ENCODE measurements at regions of chr3 and their contacts with region 1.

Region 1: DNA sequence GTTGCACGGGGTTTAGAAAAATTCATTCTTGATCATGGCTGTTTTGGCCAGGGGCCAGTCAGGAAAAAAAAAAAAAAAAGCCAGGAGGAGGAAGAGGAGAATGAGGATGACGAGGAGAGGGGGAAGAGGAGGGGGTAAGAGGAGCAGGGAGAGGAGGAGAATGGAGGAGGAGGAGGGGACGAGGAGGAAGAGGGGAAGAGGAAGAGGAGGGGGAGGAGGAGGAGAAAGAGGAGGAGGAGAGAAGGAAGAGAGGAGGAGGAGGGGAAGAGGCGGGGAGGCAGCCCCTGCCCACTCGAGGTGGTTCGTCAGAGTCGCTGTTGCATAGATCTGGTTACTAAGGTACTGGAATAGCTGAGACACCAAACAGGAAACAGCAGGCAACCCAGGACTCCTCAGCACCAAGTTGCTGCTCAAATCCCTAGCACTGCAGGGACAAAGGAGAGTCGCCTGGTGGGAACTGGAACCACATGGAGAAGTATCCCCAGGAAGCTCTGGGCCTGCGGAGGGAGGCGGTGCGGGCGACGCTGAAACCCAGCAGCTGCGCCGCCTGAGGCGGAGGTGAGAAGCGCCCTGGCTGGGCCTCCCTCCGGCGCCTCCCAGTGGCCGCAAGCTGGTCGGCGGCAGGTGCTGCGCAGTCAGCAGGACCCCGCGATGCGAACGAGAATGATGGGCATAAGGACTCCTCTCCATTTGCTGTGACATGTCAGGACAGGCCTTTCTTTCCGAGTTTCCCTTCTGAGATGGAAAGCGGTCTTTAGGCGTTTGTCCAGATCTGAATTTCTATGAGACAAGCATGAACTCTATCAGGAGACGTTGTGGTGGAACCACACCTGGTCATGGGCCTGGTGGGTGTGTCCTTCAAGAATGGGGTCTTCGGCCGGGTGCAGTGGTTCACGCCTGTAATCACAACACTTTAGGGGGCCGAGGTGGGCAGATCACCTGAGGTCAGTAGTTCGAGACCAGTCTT is 17.5 kb downstream of the FAM240A start:
- H3K4me3 Mint-ChIP-seq: peak overlapping the region; percentile 14
- H3K27ac Mint-ChIP-seq: no peak overlapping the region
- H3K4me1 Mint-ChIP-seq: peaks cover 27% of the 10 kb centered on the region
- H3K27me3 Mint-ChIP-seq: peaks cover 11% of the 10 kb centered on the region

Region 2: DNA sequence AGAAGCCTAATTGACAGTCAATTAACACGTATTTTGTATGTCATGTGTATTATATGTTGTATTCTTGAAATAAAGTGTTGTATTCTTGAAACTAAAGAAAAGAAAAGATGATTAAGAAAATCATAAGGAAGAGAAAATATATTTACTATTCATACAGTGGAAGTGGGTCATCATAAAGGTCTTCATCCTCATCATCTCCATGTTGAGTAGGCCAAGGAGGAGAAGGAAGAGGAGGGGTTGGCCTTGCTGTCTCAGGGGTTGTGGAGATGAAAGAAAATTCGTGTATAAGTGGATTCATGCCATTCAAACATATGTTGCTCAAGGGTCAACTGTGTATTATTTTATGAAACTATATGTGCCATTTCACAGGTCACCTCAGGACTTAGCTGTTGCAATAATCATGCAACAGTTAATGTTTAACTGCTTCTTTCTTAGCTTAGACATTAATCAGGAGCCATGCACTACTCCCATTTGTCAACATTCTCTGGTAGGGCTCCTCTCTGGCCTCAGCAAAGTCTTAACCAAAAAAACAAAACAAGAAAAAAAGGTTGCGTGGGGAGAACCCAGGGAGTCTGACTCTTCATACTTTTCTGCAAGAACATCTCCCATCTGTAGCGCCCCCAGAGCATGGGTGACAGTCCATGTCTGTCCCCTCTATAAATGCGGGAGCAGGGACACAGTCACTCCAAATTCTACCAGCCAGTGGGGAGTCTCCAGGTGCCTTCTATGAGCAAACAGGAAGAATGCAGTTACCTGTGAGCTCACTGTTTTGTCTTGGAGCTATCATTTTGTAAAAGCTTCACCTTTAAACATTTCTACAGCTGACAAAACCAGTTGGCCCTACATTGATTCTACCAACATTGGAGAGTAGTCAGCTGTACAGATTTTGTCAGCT is 43.8 kb before region 1 on chr3:
- intact Hi-C with region 1: loop called (anchors 10 kb)
- H3K4me3 Mint-ChIP-seq: no peak overlapping the region
- H3K27ac Mint-ChIP-seq: no peak overlapping the region
- H3K4me1 Mint-ChIP-seq: no peaks in the 10 kb centered on the region
- H3K27me3 Mint-ChIP-seq: peaks cover 18% of the 10 kb centered on the region

Region 3: DNA sequence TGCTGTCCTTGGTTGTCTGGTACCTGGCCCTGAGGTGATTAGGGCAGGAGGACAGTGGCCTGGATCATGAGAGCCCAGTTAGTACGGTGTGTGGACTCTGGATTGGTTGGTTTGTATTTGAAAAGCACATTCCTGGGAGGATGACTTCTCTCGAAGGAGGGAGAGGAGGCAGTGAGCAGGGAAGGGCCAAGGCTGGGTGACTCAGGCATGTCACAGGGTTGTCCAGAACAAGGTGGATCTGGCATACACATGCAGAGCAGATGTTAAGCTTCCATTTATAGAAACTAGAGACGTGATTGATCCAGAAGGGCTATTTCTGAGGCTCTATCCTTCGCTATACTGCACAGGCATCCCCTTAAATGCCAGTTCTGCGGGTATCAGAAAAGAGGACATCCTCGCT is 16.9 kb after region 1 on chr3:
- intact Hi-C with region 1: no loop called
- H3K4me3 Mint-ChIP-seq: no peak overlapping the region
- H3K27ac Mint-ChIP-seq: no peak overlapping the region
- H3K4me1 Mint-ChIP-seq: no peaks in the 10 kb centered on the region
- H3K27me3 Mint-ChIP-seq: peaks cover 14% of the 10 kb centered on the region

Measured in dendritic cell treated with granulocyte-macrophage colony-stimulating factor and Interleukin-4, amounts not matched to agents 40 ng/mL and 50 ng/mL, for 4 days (primary cell).